Dorsolateral prefrontal cortex (tissue), 120 donors: ENCODE measurements at regions of chr6 and their contacts with region 1.

Region 1: GRCh38 chr6:16562498-16562897 is 198.8 kb downstream of the ATXN1 start:
- DNase-seq: no peak
- H3K4me3 ChIP-seq: no peak overlapping the region
- H3K27ac ChIP-seq: peak overlapping the region in 39 of 59 donors; percentile 12 to 99 (median 52)
- H3K27me3 ChIP-seq: no peaks in the 10 kb centered on the region
- CTCF ChIP-seq: no peak

Region 2: GRCh38 chr6:16639684-16640480 is 77.4 kb after region 1 on chr6:
- intact Hi-C with region 1: no loop called
- DNase-seq: no peak
- H3K4me3 ChIP-seq: no peak overlapping the region
- H3K27ac ChIP-seq: peak overlapping the region in 45 of 59 donors; percentile 5 to 86 (median 58)
- H3K27me3 ChIP-seq: no peaks in the 10 kb centered on the region
- CTCF ChIP-seq: no peak

Region 3: DNA sequence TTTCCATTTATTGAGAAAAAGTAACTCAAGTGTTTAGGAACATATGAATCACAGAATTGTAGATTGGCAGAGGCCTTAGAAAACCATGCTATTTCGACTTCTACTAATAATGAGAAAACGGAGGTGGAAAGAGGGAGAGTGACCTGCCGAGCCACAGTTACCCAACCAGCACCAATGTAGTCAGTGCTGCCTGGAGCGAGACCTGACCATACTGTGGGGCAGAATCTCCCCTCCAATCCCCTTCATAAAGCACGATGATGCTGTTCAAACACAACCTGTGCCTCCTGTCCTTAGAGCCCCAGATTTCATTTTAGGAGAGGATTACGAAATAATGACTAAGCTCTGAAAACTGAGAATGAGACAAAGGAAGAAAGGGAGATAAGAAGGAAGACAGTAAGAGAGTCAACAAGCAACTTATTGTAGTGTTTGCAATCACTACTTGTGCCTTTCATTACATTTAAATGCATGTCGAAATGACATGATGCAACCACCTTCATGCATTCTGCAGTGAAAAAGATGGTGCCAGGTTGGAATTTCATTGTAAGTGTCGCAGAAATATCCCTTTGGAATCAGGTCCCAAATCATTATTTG is 128.2 kb after region 1 on chr6:
- intact Hi-C with region 1: loop called in 1 of 2 experiments (anchors 10 kb)
- DNase-seq: no peak
- H3K4me3 ChIP-seq: no peak overlapping the region
- H3K27ac ChIP-seq: peak overlapping the region in 1 of 59 donors; percentile 2
- H3K27me3 ChIP-seq: no peaks in the 10 kb centered on the region
- CTCF ChIP-seq: no peak